ENCODE measurements at regions of chr4 and their contacts with region 1.

Region 1: GRCh38 chr4:86934771-86935565 is at the start of gene AFF1:
- DNase-seq: peak; percentile 86
- H3K4me3 Mint-ChIP-seq: peak within 1 kb of the TSS; percentile 89
- H3K27ac Mint-ChIP-seq: peak within 1 kb of the TSS; percentile 97
- H3K4me1 Mint-ChIP-seq: peaks cover 48% of the 10 kb centered on the region
- H3K27me3 Mint-ChIP-seq: no peaks in the 10 kb centered on the region
- total RNA-seq, gene AFF1: 44.7 and 47.0 TPM in 2 replicates

Region 2: GRCh38 chr4:86530183-86530582 is 404.8 kb before region 1 on chr4:
- intact Hi-C with region 1: no loop called
- DNase-seq: no peak
- H3K4me3 Mint-ChIP-seq: no peak overlapping the region
- H3K27ac Mint-ChIP-seq: no peak overlapping the region
- H3K4me1 Mint-ChIP-seq: no peaks in the 10 kb centered on the region
- H3K27me3 Mint-ChIP-seq: peaks cover 13% of the 10 kb centered on the region

Region 3: GRCh38 chr4:86544310-86544966 is 390.5 kb before region 1 on chr4:
- intact Hi-C with region 1: loop called (anchors 5 kb)
- DNase-seq: peak; percentile 7
- H3K4me3 Mint-ChIP-seq: peak overlapping the region; percentile 75
- H3K27ac Mint-ChIP-seq: peak overlapping the region; percentile 96
- H3K4me1 Mint-ChIP-seq: peaks cover 39% of the 10 kb centered on the region
- H3K27me3 Mint-ChIP-seq: peaks cover 5% of the 10 kb centered on the region

Region 4: GRCh38 chr4:87058356-87059073 is 123.5 kb after region 1 on chr4:
- intact Hi-C with region 1: loop called (anchors 1 kb)
- DNase-seq: no peak
- H3K4me3 Mint-ChIP-seq: peak overlapping the region; percentile 3
- H3K27ac Mint-ChIP-seq: peak overlapping the region; percentile 82
- H3K4me1 Mint-ChIP-seq: peaks cover 65% of the 10 kb centered on the region
- H3K27me3 Mint-ChIP-seq: no peaks in the 10 kb centered on the region

Region 5: GRCh38 chr4:87220094-87220822 is 285.3 kb after region 1 on chr4 and contains the start of gene KLHL8:
- intact Hi-C with region 1: loop called (anchors 1 kb)
- DNase-seq: peak; percentile 89
- H3K4me3 Mint-ChIP-seq: peak within 1 kb of the TSS; percentile 89
- H3K27ac Mint-ChIP-seq: peak within 1 kb of the TSS; percentile 88
- H3K4me1 Mint-ChIP-seq: peaks cover 18% of the 10 kb centered on the region
- H3K27me3 Mint-ChIP-seq: peaks cover 19% of the 10 kb centered on the region
- total RNA-seq, gene KLHL8: 15.1 and 17.6 TPM in 2 replicates

Region 6: DNA sequence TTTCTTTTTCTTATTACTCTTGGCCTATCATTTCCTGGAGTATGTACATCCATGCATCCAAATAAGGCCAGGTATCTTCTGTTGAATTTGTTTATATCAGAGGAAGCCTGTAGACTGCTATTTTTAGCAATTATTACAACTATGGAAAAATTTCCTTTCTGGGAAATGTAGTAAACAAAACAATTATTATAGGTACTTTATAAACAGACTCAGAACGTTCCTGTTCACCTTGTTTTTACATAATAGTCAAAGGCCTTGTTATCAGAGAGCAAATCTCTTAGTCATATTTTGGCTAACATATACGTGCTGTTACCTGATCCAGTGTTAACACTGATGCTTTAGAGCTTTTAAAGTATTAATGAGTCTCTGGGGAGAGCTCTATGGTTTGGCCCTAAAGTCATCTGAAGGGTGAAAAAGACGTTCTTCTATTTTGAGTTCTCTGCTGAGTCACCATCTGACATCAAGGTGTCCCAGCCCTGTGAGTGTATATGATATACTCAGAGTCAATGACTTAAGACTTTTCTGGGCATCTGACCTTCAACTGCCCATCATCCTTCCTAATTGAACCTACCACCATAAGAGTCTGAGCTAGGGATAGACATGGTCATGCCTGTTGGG is 586.9 kb after region 1 on chr4:
- intact Hi-C with region 1: no loop called
- DNase-seq: no peak
- H3K4me3 Mint-ChIP-seq: no peak overlapping the region
- H3K27ac Mint-ChIP-seq: no peak overlapping the region
- H3K4me1 Mint-ChIP-seq: no peaks in the 10 kb centered on the region
- H3K27me3 Mint-ChIP-seq: no peaks in the 10 kb centered on the region

Region 7: DNA sequence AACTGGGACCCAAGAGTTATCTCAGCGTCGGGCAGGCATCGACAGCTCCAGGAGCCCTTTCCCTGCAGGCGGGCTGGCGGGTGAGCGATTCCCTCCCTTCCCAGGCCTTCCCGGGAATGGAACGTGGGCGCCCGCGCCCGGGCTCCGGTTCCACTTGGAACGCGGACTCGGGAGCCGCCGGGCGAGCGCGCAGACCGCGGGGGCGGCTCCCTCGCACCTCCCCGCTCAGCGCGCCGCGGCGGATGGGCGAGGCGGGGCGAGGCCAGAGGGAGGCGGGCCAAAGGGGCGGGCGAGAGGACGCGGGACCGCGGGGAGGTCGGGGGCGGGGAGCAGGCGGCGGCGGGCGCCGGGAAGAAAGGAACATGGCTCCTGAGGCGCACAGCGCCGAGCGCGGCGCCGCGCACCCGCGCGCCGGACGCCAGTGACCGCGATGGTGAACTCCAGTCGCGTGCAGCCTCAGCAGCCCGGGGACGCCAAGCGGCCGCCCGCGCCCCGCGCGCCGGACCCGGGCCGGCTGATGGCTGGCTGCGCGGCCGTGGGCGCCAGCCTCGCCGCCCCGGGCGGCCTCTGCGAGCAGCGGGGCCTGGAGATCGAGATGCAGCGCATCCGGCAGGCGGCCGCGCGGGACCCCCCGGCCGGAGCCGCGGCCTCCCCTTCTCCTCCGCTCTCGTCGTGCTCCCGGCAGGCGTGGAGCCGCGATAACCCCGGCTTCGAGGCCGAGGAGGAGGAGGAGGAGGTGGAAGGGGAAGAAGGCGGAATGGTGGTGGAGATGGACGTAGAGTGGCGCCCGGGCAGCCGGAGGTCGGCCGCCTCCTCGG is 1072.5 kb after region 1 on chr4 and contains the start of gene PKD2:
- intact Hi-C with region 1: loop called (anchors 10 kb)
- DNase-seq: peak; percentile 79
- H3K4me3 Mint-ChIP-seq: peak within 1 kb of the TSS; percentile 89
- H3K27ac Mint-ChIP-seq: peak within 1 kb of the TSS; percentile 80
- H3K4me1 Mint-ChIP-seq: peaks cover 41% of the 10 kb centered on the region
- H3K27me3 Mint-ChIP-seq: peaks cover 20% of the 10 kb centered on the region
- total RNA-seq, gene PKD2: 10.1 and 11.7 TPM in 2 replicates

Region 8: DNA sequence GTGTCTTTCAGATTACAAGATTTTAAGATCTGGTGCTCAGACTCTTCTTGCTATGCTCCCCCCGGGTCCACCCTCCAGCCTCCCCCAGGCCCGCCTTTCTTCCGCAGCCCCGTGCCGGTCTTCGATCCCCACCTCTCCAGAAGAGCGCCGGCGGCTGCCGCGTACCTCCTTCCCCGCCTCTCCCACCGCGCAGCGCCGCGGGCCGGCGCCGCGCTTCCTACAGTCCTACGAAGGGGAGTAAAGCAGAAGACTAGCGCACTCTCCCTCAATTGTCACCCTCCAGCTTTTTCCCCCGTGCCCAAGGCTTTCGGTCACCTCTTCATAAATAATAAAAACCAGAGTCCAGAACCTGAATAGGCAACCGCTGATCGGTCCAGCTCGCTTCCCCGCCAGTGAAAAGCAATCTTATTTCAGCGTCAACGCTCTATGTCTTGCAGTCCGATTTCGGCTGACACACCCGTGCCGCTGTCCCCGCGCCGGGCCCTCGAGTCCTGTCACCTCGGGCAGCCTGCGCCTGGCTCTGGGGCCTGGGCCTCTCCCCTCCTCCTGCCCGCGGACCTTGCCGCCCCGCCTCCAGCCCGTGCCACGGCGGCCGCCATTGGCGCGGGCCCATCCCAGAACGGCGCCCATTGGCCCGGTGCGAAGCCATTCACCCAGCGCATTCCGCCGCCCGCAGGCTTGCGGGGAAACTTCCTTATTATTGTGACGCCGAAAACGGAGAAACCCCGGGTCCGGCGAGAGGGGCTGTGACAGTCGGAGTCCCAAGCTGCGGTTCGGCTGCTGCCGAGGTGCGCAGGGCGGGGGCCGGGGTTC is 1657.0 kb after region 1 on chr4 and contains the start of gene HERC3:
- intact Hi-C with region 1: loop called (anchors 2 kb)
- DNase-seq: peak; percentile 88
- H3K4me3 Mint-ChIP-seq: peak within 1 kb of the TSS; percentile 91
- H3K27ac Mint-ChIP-seq: peak within 1 kb of the TSS; percentile 88
- H3K4me1 Mint-ChIP-seq: peaks cover 35% of the 10 kb centered on the region
- H3K27me3 Mint-ChIP-seq: peaks cover 28% of the 10 kb centered on the region
- total RNA-seq, gene HERC3: 12.8 and 14.2 TPM in 2 replicates